Lower leg skin (tissue), 4 donors: ENCODE measurements at regions of chr6 and their contacts with region 1.

Region 1: GRCh38 chr6:47309291-47310130 is at the start of gene TNFRSF21:
- DNase-seq: peak; percentile 89 to 97
- H3K4me3 ChIP-seq: peak within 1 kb of the TSS; percentile 56
- CTCF ChIP-seq: peak in 1 of 3 donors; percentile 71
- POLR2A ChIP-seq: no peak
- total RNA-seq, gene TNFRSF21: 1.6 to 5.4 (median 3.1) TPM

Region 2: DNA sequence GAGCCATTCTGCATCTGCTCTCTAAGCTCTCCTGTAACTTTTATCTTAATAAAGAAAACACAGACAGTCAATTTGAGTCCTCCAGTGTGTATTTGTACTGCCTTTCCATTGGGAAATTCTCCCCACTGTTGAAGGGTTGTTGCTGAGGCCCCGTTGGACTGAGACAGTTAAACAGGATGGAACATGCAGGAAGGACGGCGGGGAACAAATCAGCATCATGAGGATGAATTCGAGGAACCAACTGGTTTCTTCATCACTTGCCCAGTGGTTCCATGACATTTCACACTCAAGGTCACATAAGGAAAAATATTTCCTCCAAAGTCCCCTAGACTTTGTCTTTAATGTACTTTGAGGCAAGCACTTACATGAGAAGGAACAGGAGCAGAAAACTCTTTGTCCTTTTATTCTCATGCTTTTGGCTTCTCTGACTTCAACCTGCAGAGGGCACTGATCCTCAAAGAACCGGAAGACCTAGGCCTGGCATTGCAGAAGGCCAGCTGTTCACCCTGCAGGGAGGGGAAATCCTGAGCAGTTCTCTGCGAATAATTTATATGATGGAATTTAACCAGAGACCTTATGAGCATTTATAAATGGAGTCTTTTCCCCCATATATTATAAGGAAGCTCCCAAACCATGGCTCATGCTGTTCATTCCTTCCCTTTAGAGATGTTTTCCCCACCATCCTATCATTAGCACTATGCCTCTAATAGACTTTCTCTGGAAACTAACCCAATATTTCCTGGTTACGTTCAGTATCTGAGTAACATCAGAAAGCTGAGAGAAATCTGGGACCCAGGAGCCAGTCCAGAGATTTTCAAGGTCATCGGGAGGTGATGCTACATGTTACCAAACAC is 212.2 kb before region 1 on chr6:
- intact Hi-C with region 1: loop called (anchors 2 kb)
- DNase-seq: peak in 1 of 2 donors; percentile 59
- H3K4me3 ChIP-seq: no peak overlapping the region
- CTCF ChIP-seq: no peak
- POLR2A ChIP-seq: no peak

Region 3: DNA sequence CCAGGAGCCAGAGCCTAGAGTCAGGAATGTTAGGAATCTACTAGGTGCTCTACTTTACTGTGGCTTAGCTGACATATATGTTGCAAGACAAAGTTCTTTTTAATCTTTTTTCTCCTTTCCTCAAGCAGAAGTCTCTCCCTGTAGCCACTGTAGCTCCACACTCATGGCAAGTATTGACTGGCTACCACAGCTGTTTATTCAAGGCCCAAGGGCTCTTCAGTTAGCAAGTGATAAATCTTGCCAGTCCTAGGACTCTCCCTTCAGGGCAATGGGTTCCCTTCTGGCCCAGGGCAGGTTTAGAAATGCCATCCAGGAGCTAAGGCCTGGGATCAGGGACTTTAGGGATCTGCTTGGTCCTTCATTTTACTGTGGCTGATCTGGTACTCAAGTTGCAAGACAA is 82.2 kb after region 1 on chr6:
- intact Hi-C with region 1: no loop called
- DNase-seq: no peak
- H3K4me3 ChIP-seq: no peak overlapping the region
- CTCF ChIP-seq: no peak
- POLR2A ChIP-seq: no peak